ENCODE measurements at regions of chr1 and their contacts with region 1.

Region 1: GRCh38 chr1:93179886-93180722 is at the start of gene TMED5:
- DNase-seq: peak; percentile 99
- H3K4me3 ChIP-seq: peak within 1 kb of the TSS; percentile 72 to 93 (median 87)
- H3K27ac ChIP-seq: peak within 1 kb of the TSS; percentile 95 to 100 (median 100)
- H3K4me1 ChIP-seq: peaks cover 18 to 47% (median 41%) of the 10 kb centered on the region in 4 donors
- H3K27me3 ChIP-seq: no peaks in the 10 kb centered on the region
- CTCF ChIP-seq: peak in 2 of 3 experiments; percentile 37 to 38
- EP300 ChIP-seq: no peak
- POLR2A ChIP-seq: peak; percentile 87
- total RNA-seq, gene TMED5: 45.7 to 72.6 (median 59.2) TPM

Region 2: DNA sequence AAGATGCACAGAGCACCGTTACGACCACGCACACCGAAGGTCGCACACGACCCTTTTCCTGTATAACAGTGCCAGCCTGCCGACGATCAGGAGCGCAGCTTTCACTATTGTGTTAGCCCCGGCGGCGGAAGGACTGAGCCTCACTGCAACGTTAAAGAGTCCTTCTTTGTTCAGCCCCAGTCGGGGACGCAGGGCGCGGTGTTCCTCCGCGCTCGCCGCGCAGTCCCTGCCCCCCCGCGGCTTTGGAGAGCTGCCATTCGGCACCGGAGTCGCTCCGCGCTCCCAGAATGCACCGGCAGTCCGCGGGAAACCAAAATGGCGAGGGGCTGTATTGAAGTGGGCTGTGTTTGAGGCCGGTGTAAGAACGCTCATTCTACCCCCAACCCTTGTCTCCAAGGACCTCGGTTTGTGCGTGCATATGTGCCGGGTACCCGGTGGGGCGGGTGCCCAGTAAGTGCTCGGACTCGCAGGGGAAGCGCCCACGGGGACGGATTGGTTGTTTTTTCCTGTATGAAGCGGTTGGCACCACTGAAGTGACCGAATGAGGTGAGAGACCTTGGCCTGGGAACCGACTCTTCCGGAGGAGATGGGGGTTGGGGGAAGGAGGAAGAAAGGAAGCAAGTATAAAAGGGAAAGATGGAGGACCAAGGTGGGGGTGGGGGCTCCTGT is 101.0 kb before region 1 on chr1 and contains the start of gene MTF2:
- intact Hi-C with region 1: loop called (anchors 5 kb)
- DNase-seq: peak; percentile 97
- H3K4me3 ChIP-seq: peak within 1 kb of the TSS; percentile 87 to 94 (median 90)
- H3K27ac ChIP-seq: peak within 1 kb of the TSS; percentile 82 to 85 (median 83)
- H3K4me1 ChIP-seq: peaks cover 26 to 36% (median 31%) of the 10 kb centered on the region in 4 donors
- H3K27me3 ChIP-seq: no peaks in the 10 kb centered on the region
- CTCF ChIP-seq: peak in 1 of 3 experiments; percentile 21
- EP300 ChIP-seq: no peak
- POLR2A ChIP-seq: peak; percentile 6
- total RNA-seq, gene MTF2: 7.1 to 13.4 (median 9.9) TPM

Region 3: GRCh38 chr1:93219443-93219842 is 39.3 kb after region 1 on chr1:
- intact Hi-C with region 1: no loop called
- DNase-seq: no peak
- H3K4me3 ChIP-seq: no peak overlapping the region
- H3K27ac ChIP-seq: no peak overlapping the region
- H3K4me1 ChIP-seq: no peaks in the 10 kb centered on the region
- H3K27me3 ChIP-seq: no peaks in the 10 kb centered on the region
- CTCF ChIP-seq: no peak
- EP300 ChIP-seq: no peak
- POLR2A ChIP-seq: no peak

Region 4: GRCh38 chr1:93345633-93346420 is 165.7 kb after region 1 on chr1 and contains the start of gene DR1:
- intact Hi-C with region 1: loop called (anchors 10 kb)
- DNase-seq: peak; percentile 96
- H3K4me3 ChIP-seq: peak within 1 kb of the TSS; percentile 84 to 97 (median 90)
- H3K27ac ChIP-seq: peak within 1 kb of the TSS; percentile 88 to 95 (median 93)
- H3K4me1 ChIP-seq: peaks cover 26 to 44% (median 38%) of the 10 kb centered on the region in 4 donors
- H3K27me3 ChIP-seq: no peaks in the 10 kb centered on the region
- CTCF ChIP-seq: peak in 1 of 3 experiments; percentile 12
- EP300 ChIP-seq: no peak
- POLR2A ChIP-seq: peak; percentile 24
- total RNA-seq, gene DR1: 20.3 to 32.5 (median 27.5) TPM